CD8-positive, alpha-beta memory T cell (primary cell): ENCODE measurements at regions of chr1 and their contacts with region 1.

Region 1: DNA sequence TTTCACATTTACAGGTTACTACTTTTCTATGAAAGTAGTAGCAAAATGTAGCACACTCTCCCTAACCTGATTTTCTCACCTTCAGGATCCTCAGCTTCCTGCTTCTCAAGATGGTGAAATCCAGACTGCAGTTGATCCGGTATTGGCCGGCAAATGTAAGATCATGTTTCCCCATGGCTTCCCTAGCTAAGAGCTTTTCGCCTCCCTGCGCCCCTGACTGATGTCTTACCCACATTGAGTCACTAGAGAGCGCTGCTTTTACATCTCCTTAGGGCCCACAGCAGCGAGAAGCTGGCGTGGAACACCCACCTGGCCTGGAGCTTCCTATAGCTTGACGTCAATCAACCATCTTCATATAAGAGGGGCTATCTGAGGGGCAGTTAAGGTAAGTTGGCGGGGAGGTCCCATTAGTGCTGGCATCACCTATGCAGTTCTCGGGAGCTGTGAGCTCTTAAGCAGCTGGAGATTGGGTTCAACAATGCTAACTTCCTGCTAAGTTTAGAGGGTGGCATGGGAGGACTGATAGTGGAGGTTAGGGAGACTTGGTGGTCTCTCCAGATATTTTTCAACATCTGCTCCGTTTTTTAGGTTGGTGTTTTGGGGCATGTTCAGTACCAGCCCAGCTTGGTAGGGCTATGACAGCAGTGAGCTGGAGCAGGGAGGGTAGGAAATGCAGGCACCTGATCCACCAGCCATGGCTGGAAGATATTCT is 5.5 kb downstream of the PTPN7 start:
- DNase-seq: peak in 4 of 5 donors; percentile 39 to 70 (median 46)
- H3K4me3 ChIP-seq: no peak overlapping the region
- H3K4me3 Mint-ChIP-seq: peak overlapping the region in 4 of 7 donors; percentile 8 to 38 (median 27)
- H3K27ac ChIP-seq: peak overlapping the region; percentile 0
- H3K27ac Mint-ChIP-seq: peak overlapping the region; percentile 70 to 97 (median 94)
- H3K4me1 ChIP-seq: peaks cover 42% of the 10 kb centered on the region
- H3K4me1 Mint-ChIP-seq: peaks cover 51 to 63% (median 59%) of the 10 kb centered on the region in 3 donors
- H3K27me3 ChIP-seq: no peaks in the 10 kb centered on the region
- H3K27me3 Mint-ChIP-seq: peaks cover 0 to 3% of the 10 kb centered on the region in 2 donors

Region 2: GRCh38 chr1:202135221-202135721 is 19.7 kb before region 1 on chr1:
- CTCF ChIA-PET with region 1: interaction called, 20 read pairs
- POLR2A ChIA-PET with region 1: no interaction called
- DNase-seq: peak; percentile 18 to 67 (median 41)
- H3K4me3 ChIP-seq: no peak overlapping the region
- H3K4me3 Mint-ChIP-seq: no peak overlapping the region
- H3K27ac ChIP-seq: no peak overlapping the region
- H3K27ac Mint-ChIP-seq: peak overlapping the region in 2 of 8 donors; percentile 50 to 51
- H3K4me1 ChIP-seq: no peaks in the 10 kb centered on the region
- H3K4me1 Mint-ChIP-seq: peaks cover 8 to 18% (median 10%) of the 10 kb centered on the region in 3 donors
- H3K27me3 ChIP-seq: no peaks in the 10 kb centered on the region
- H3K27me3 Mint-ChIP-seq: no peaks in the 10 kb centered on the region

Region 3: DNA sequence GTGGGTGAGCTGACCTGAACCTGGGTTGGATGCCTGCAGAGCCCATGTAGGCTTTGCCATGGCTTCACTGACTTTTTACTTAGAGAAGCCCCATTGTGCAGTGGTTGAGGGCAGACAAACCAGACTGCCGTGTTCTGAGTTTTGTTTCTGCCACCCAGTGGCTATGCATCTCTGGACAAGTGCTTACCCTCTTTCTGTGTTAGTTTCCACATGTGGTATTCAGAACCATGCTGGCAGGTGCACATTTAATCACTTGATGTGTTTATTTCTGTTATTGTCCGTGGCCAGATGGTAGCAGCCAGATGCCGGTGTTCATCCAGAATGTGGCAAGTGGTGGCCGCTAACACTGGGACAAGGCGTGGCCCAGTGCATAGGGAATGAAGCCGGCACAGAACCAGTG is 15.8 kb after region 1 on chr1:
- CTCF ChIA-PET with region 1: interaction called, 26 read pairs
- POLR2A ChIA-PET with region 1: interaction called, 3 read pairs
- DNase-seq: no peak
- H3K4me3 ChIP-seq: no peak overlapping the region
- H3K4me3 Mint-ChIP-seq: no peak overlapping the region
- H3K27ac ChIP-seq: no peak overlapping the region
- H3K27ac Mint-ChIP-seq: peak overlapping the region in 1 of 8 donors; percentile 68
- H3K4me1 ChIP-seq: peaks cover 6% of the 10 kb centered on the region
- H3K4me1 Mint-ChIP-seq: peaks cover 7 to 21% (median 15%) of the 10 kb centered on the region in 3 donors
- H3K27me3 ChIP-seq: no peaks in the 10 kb centered on the region
- H3K27me3 Mint-ChIP-seq: no peaks in the 10 kb centered on the region

Region 4: DNA sequence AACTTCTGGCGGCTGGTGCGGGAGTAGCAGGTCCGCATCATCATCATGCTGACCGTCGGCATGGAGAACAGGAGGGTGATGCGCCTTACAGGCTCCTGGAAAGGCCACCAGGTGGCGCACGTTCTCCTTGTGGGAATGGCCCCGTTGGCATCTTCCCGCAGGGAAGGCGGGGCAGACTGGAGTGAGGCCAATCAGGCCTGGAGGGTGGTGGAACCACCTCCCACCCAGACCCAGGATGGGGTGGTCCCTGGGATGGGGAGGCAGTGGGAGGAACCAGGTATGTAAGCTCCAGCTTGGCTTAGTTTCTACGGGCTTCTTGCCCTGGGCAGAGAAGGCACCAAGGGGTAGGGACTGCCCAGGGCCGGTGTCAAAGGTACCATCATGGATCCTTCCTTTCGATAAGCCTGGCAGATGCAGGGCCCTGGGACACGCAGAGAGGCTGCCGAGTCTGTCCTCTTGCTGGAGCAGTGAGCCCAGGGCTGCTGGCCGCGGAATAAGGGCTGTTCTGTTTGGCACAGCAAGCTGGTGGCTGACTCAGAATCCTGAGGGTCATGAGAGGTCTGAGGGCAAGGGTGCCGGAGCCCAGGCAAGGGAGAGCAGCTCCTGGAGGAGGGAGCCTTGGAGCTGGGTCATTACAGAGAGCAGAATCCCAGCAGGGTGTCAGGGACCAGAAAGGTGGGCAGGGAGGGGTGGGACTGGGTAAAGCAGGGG is 30.0 kb after region 1 on chr1:
- CTCF ChIA-PET with region 1: interaction called, 22 read pairs
- POLR2A ChIA-PET with region 1: interaction called, 3 read pairs
- DNase-seq: peak; percentile 41 to 76 (median 62)
- H3K4me3 ChIP-seq: no peak overlapping the region
- H3K4me3 Mint-ChIP-seq: peak overlapping the region in 1 of 7 donors; percentile 3
- H3K27ac ChIP-seq: no peak overlapping the region
- H3K27ac Mint-ChIP-seq: peak overlapping the region in 2 of 8 donors; percentile 37 to 39
- H3K4me1 ChIP-seq: peaks cover 8% of the 10 kb centered on the region
- H3K4me1 Mint-ChIP-seq: peaks cover 11 to 14% (median 13%) of the 10 kb centered on the region in 3 donors
- H3K27me3 ChIP-seq: no peaks in the 10 kb centered on the region
- H3K27me3 Mint-ChIP-seq: peaks cover 4 to 10% of the 10 kb centered on the region in 2 donors